ENCODE measurements at regions of chr11 and their contacts with region 1.

Region 1: GRCh38 chr11:43358801-43359421 is at the start of gene TTC17:
- DNase-seq: peak; percentile 89
- ATAC-seq: peak; percentile 95
- H3K4me3 ChIP-seq: peak within 1 kb of the TSS; percentile 94
- H3K27ac ChIP-seq: peak within 1 kb of the TSS; percentile 50
- H3K4me1 ChIP-seq: peaks cover 22% of the 10 kb centered on the region
- H3K27me3 ChIP-seq: no peaks in the 10 kb centered on the region
- CTCF ChIP-seq: no peak
- total RNA-seq, gene TTC17: 42.1 and 51.7 TPM in 2 replicates

Region 2: GRCh38 chr11:43164826-43165225 is 194.1 kb before region 1 on chr11:
- CTCF ChIA-PET with region 1: no interaction called
- POLR2A ChIA-PET with region 1: no interaction called
- intact Hi-C with region 1: no loop called
- DNase-seq: no peak
- ATAC-seq: no peak
- H3K4me3 ChIP-seq: no peak overlapping the region
- H3K27ac ChIP-seq: no peak overlapping the region
- H3K4me1 ChIP-seq: no peaks in the 10 kb centered on the region
- H3K27me3 ChIP-seq: no peaks in the 10 kb centered on the region
- CTCF ChIP-seq: no peak

Region 3: GRCh38 chr11:43311791-43312607 is 46.9 kb before region 1 on chr11 and contains the start of gene API5:
- CTCF ChIA-PET with region 1: interaction called, 7 read pairs
- POLR2A ChIA-PET with region 1: interaction called, 8 read pairs
- intact Hi-C with region 1: loop called (anchors 5 kb)
- DNase-seq: peak; percentile 94
- ATAC-seq: peak; percentile 99
- H3K4me3 ChIP-seq: peak within 1 kb of the TSS; percentile 100
- H3K27ac ChIP-seq: peak within 1 kb of the TSS; percentile 31
- H3K4me1 ChIP-seq: peaks cover 14% of the 10 kb centered on the region
- H3K27me3 ChIP-seq: no peaks in the 10 kb centered on the region
- CTCF ChIP-seq: peak; percentile 72
- total RNA-seq, gene API5: 79.5 and 83.7 TPM in 2 replicates

Region 4: DNA sequence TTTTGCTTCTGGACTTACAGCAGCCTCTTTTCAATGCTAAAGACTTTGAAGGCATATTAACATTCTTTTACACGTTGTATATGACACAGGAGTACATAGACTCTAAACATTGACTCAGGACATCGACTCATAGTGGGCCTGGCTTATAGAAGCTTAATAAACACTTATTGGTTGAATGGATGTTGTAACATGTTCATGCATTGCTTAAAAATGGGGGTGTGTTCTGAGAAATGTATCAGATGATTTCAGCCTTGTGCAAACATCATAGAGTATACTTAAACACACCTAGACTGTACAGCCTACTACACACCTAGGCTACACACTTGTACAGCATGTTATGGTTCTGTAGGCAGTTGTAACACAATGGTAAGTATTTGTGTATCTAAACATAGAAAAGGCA is 17.7 kb after region 1 on chr11:
- CTCF ChIA-PET with region 1: no interaction called
- POLR2A ChIA-PET with region 1: interaction called, 7 read pairs
- intact Hi-C with region 1: loop called (anchors 1 kb)
- DNase-seq: peak; percentile 86
- ATAC-seq: peak; percentile 97
- H3K4me3 ChIP-seq: peak overlapping the region; percentile 43; the same call in 1 of the 2 replicates
- H3K27ac ChIP-seq: peak overlapping the region; percentile 64
- H3K4me1 ChIP-seq: peaks cover 15% of the 10 kb centered on the region
- H3K27me3 ChIP-seq: no peaks in the 10 kb centered on the region
- CTCF ChIP-seq: no peak